PC-3 (cell line): ENCODE measurements at regions of chrX and their contacts with region 1.

Region 1: DNA sequence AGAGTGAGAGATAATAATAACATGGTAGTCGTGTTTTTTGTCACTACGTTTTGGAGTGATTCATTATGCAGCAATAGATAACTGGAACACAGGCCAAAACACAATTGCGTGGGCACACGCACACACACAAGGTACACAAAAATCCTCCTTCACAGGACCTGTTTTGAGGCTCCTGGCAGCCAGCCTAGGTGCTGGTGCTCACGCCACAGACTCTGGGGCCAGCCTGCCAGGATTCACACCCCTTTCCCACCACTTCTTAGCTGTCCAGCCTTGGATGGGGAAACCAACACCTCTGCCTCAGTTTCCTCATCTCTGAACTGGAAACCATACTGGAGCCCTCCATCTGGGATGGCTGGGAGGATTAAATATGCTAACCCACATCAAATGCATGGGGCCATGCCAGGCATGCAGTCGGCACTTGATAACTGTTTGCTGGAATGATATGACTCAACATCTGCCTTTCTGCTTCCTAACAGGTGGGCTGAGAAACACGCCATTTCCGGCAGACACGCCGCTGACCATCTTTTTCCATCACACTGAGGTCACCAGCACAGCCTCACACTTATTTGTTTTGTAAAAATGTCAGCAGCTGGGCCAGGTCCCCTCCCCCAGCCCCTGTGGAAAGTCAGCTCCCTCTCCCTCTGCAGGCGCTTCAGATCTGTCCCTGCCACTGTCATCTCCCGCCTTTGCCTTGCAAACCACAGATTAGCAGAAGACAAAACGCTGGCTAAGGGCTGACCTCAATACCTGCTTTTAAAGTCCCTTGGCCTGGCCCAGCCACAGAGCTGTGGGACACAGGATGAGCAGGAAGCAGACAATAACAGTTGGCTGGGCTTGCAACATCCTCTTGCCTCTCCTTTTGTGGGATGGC is 237.5 kb downstream of the BCOR start:
- DNase-seq: peak; percentile 73
- ATAC-seq: peak; percentile 67
- H3K4me3 ChIP-seq: no peak overlapping the region
- H3K27ac ChIP-seq: peak overlapping the region; percentile 88
- H3K4me1 ChIP-seq: peaks cover 34% of the 10 kb centered on the region
- H3K27me3 ChIP-seq: no peaks in the 10 kb centered on the region
- CTCF ChIP-seq: no peak

Region 2: DNA sequence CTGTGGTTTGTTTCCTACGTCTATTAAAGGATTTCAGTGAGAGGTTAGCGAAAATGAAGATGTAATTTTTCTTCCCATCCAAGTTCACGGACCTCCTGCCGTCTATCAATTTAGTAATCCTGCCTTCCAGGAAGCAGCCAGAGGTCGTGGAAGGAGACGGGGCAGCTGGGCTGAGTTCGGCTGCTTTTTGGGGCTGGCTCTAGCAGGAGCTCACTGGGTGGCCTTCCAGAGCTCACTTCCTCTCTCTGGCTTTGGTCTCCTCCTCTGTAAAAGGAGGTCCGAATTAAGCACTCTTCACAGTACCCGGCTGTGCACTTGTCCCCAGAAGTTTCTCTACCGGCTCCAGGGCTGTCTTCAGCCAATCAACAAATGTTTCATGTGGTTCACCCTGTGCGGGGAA is 57.9 kb before region 1 on chrX:
- CTCF ChIA-PET with region 1: no interaction called
- POLR2A ChIA-PET with region 1: no interaction called
- intact Hi-C with region 1: no loop called
- DNase-seq: no peak
- ATAC-seq: no peak
- H3K4me3 ChIP-seq: no peak overlapping the region
- H3K27ac ChIP-seq: no peak overlapping the region
- H3K4me1 ChIP-seq: no peaks in the 10 kb centered on the region
- H3K27me3 ChIP-seq: no peaks in the 10 kb centered on the region
- CTCF ChIP-seq: no peak

Region 3: GRCh38 chrX:39891781-39892180 is 31.6 kb after region 1 on chrX:
- CTCF ChIA-PET with region 1: no interaction called
- POLR2A ChIA-PET with region 1: interaction called, 17 read pairs
- intact Hi-C with region 1: no loop called
- DNase-seq: peak; percentile 13
- ATAC-seq: no peak
- H3K4me3 ChIP-seq: no peak overlapping the region
- H3K27ac ChIP-seq: no peak overlapping the region
- H3K4me1 ChIP-seq: peaks cover 32% of the 10 kb centered on the region
- H3K27me3 ChIP-seq: no peaks in the 10 kb centered on the region
- CTCF ChIP-seq: no peak

Region 4: DNA sequence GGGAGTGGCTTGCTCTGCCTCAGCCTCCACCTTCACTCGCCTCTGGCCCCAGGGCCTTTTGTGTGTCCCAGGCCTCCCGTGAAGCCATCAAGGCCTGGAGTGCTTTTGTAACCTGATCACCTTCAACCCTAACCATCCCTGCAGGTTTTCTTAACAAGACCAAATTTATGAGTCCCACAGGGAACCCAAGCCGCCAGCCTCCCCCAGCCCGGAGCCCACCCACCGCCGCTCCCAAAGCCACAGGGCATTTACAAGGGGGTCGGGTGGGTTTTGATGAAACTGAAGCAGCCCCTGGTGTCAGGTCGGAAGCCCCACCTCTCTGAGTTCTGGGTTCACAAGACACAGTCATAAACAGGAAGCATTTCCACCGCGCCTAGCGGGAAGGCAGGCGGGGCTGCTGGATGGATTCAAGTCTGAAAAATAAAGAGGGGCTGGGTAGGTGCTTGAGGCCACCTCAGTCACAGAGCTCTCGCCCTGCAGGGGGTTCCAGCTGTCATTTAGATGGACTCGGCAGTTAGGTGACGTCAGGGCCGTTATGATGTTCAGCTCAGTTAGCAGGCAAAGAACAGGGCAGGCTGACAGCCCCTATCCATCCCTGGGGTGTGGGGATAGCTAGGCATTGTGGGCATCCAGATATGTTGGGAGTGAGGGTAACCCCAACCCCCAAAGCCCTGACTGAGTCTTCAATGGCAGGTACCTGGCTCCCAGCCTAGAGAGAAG is 109.0 kb after region 1 on chrX:
- CTCF ChIA-PET with region 1: no interaction called
- POLR2A ChIA-PET with region 1: no interaction called
- intact Hi-C with region 1: no loop called
- DNase-seq: no peak
- ATAC-seq: no peak
- H3K4me3 ChIP-seq: no peak overlapping the region
- H3K27ac ChIP-seq: no peak overlapping the region
- H3K4me1 ChIP-seq: peaks cover 12% of the 10 kb centered on the region; the same call in 1 of the 2 replicates
- H3K27me3 ChIP-seq: no peaks in the 10 kb centered on the region
- CTCF ChIP-seq: no peak